ENCODE measurements at regions of chr11 and their contacts with region 1.

Region 1: GRCh38 chr11:68900841-68901381 is 2.7 kb downstream of the MRPL21 start:
- DNase-seq: no peak
- H3K4me3 ChIP-seq: no peak overlapping the region
- H3K4me3 Mint-ChIP-seq: no peak overlapping the region
- H3K27ac Mint-ChIP-seq: no peak overlapping the region
- H3K4me1 ChIP-seq: peaks cover 20% of the 10 kb centered on the region
- H3K4me1 Mint-ChIP-seq: peaks cover 29% of the 10 kb centered on the region
- H3K27me3 ChIP-seq: no peaks in the 10 kb centered on the region
- H3K27me3 Mint-ChIP-seq: no peaks in the 10 kb centered on the region
- CTCF ChIP-seq: no peak

Region 2: GRCh38 chr11:68751004-68751856 is 149.7 kb before region 1 on chr11 and contains the start of gene TESMIN:
- CTCF ChIA-PET with region 1: no interaction called
- POLR2A ChIA-PET with region 1: no interaction called
- intact Hi-C with region 1: no loop called
- DNase-seq: peak; percentile 97 to 99
- H3K4me3 ChIP-seq: peak within 1 kb of the TSS; percentile 67
- H3K4me3 Mint-ChIP-seq: peak within 1 kb of the TSS; percentile 72
- H3K27ac Mint-ChIP-seq: peak within 1 kb of the TSS; percentile 69
- H3K4me1 ChIP-seq: peaks cover 7% of the 10 kb centered on the region; the same call in 1 of the 2 replicates
- H3K4me1 Mint-ChIP-seq: peaks cover 25% of the 10 kb centered on the region
- H3K27me3 ChIP-seq: no peaks in the 10 kb centered on the region
- H3K27me3 Mint-ChIP-seq: peaks cover 5% of the 10 kb centered on the region
- CTCF ChIP-seq: no peak
- total RNA-seq, gene TESMIN: 22.1 and 26.2 TPM in 2 replicates

Region 3: DNA sequence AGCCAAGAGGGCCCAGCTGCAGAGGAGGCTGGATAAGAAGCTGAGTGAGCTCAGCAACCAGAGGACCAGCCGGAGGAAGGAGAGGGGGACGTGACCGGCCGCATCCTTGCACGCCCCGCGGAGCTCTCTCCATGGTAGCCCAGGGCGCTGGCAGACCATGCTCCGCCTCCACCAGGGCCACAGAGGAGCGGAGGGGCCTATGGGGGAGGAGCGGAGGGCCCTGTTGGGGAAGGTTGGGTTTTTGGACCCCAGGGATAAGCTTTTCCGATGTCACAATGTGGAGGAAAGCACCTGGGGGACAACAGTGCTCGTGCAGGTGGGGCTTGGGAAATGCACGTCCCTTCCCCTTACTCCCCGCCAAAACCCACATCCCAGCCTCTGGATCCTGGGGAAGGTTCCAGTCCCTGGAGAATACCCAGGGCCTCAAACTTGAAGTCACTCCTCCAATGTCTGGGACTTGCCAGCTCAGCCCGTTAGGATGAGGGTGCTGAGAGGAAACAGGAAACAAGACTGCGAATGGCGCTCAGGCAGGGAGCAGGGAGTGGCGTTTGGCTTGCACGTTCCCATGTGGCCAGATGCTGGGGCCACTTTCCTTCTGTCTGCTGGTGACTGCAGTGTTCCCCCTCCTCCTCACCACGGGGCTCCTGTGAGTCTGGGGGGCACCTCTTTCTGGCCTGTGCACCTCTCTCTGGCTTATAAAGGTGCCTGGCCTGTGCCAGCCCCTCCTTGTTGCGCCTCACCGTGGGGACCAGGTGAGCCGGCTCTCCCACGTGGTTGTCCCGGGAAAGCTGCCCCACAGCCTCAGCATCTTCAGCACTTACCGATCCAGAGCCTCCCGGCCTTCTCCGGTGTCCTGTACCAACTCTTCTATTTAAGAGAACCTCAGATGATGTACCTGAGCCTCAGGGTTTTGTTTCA is 39.0 kb after region 1 on chr11:
- CTCF ChIA-PET with region 1: no interaction called
- POLR2A ChIA-PET with region 1: no interaction called
- intact Hi-C with region 1: loop called (anchors 2 kb)
- DNase-seq: no peak
- H3K4me3 ChIP-seq: no peak overlapping the region
- H3K4me3 Mint-ChIP-seq: no peak overlapping the region
- H3K27ac Mint-ChIP-seq: no peak overlapping the region
- H3K4me1 ChIP-seq: no peaks in the 10 kb centered on the region
- H3K4me1 Mint-ChIP-seq: no peaks in the 10 kb centered on the region
- H3K27me3 ChIP-seq: no peaks in the 10 kb centered on the region
- H3K27me3 Mint-ChIP-seq: no peaks in the 10 kb centered on the region
- CTCF ChIP-seq: no peak